ENCODE measurements at regions of chr6 and their contacts with region 1.

Region 1: DNA sequence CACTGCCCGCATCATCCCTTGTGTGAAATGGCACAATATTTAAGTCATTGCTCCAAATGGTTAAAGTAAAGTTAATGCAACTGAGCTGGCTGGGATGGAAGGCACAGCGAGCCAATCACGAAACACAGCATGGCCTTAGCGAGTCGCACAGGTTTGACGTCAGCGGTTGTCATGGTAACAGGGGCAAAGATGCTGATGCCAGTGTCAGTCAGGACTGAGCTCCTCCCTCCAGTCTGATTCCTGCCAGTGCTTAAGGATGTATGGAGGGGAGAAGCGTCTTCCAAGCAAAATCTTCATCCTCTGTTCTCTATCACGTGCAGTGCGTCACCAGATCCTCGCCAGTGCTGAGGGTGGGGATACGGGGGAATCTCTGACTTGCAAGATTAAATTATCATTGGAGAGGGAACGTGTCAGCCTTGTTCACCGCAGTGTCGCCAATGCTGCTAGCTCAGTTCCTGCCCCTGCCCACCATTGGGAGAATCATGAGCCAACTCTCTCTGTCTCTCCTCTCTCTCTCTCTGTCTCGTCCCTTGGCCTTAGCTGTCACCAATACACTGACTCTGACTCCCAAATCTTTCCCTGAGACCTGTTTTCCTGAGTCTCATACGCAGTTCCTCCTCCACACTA is 24.5 kb downstream of the TSPYL4 start:
- DNase-seq: peak in 4 of 35 experiments; percentile 3 to 9 (median 6)
- ATAC-seq: no peak
- H3K4me3 ChIP-seq: no peak overlapping the region
- H3K4me3 Mint-ChIP-seq: no peak overlapping the region
- H3K27ac ChIP-seq: no peak overlapping the region
- H3K27ac Mint-ChIP-seq: no peak overlapping the region
- H3K4me1 ChIP-seq: no peaks in the 10 kb centered on the region
- H3K4me1 Mint-ChIP-seq: no peaks in the 10 kb centered on the region
- H3K27me3 ChIP-seq: no peaks in the 10 kb centered on the region
- H3K27me3 Mint-ChIP-seq: no peaks in the 10 kb centered on the region

Region 2: GRCh38 chr6:116200619-116201249 is 28.7 kb before region 1 on chr6:
- CTCF ChIA-PET with region 1: no interaction called
- POLR2A ChIA-PET with region 1: no interaction called
- DNase-seq: no peak
- ATAC-seq: no peak
- H3K4me3 ChIP-seq: no peak overlapping the region
- H3K4me3 Mint-ChIP-seq: no peak overlapping the region
- H3K27ac ChIP-seq: no peak overlapping the region
- H3K27ac Mint-ChIP-seq: no peak overlapping the region
- H3K4me1 ChIP-seq: no peaks in the 10 kb centered on the region
- H3K4me1 Mint-ChIP-seq: peaks cover 0 to 7% (median 0%) of the 10 kb centered on the region in 3 donors
- H3K27me3 ChIP-seq: no peaks in the 10 kb centered on the region
- H3K27me3 Mint-ChIP-seq: no peaks in the 10 kb centered on the region

Region 3: GRCh38 chr6:116246089-116246488 is 16.7 kb after region 1 on chr6:
- CTCF ChIA-PET with region 1: interaction called in 1 of 2 experiments, 3 read pairs
- POLR2A ChIA-PET with region 1: interaction called in 1 of 2 experiments, 16 read pairs
- DNase-seq: no peak
- ATAC-seq: no peak
- H3K4me3 ChIP-seq: no peak overlapping the region
- H3K4me3 Mint-ChIP-seq: no peak overlapping the region
- H3K27ac ChIP-seq: no peak overlapping the region
- H3K27ac Mint-ChIP-seq: no peak overlapping the region
- H3K4me1 ChIP-seq: peaks cover 6 to 8% of the 10 kb centered on the region in 2 experiments
- H3K4me1 Mint-ChIP-seq: peaks cover 12 to 27% (median 24%) of the 10 kb centered on the region in 3 donors
- H3K27me3 ChIP-seq: no peaks in the 10 kb centered on the region
- H3K27me3 Mint-ChIP-seq: no peaks in the 10 kb centered on the region

Region 4: DNA sequence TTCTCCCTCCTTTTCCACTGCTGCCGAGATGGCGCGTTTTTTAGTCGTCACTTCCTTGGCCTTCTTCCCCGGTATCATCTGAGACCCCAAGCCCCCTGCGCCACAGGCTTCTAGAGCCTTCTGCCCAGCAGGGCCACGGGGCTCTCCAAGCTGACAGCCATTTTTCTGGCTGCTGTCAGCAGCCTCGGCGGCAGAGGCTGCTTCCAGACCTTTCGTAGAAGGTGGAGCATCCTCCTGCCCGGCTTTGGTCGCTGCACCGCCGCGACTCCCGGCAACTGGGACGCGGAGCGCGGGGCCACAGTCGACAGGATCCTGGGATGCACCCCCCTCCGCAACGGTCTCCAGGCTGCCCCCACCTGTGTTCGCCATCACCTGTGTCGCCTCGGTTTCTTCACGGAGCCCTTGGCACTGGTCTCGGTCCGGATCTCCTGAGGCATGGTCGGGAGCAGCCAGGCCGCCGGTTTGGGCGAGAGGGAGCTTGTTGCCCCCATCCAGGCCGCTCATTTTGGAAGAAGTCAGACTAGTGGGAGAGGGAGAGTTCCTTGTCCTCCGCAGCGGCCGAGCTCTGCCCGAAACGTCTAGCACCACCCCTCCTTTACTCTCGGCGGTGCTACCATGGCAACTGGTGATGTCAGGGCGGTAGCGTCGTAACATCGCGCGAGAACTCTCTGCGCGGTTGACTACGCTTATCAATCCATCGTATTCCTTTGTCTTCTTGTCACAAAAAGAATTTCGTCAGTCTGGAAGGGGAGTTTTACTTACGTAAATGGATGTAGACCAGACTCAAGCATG is 24.3 kb after region 1 on chr6 and contains the start of gene TSPYL4:
- CTCF ChIA-PET with region 1: no interaction called
- POLR2A ChIA-PET with region 1: interaction called in 1 of 2 experiments, 14 read pairs
- DNase-seq: peak; percentile 78 to 98 (median 90)
- ATAC-seq: peak; percentile 96 to 98 (median 98)
- H3K4me3 ChIP-seq: peak within 1 kb of the TSS; percentile 71 to 100
- H3K4me3 Mint-ChIP-seq: no peak within 1 kb of the TSS
- H3K27ac ChIP-seq: peak within 1 kb of the TSS; percentile 98
- H3K27ac Mint-ChIP-seq: no peak within 1 kb of the TSS
- H3K4me1 ChIP-seq: peaks cover 28 to 29% of the 10 kb centered on the region in 2 experiments
- H3K4me1 Mint-ChIP-seq: peaks cover 8 to 34% (median 21%) of the 10 kb centered on the region in 3 donors
- H3K27me3 ChIP-seq: no peaks in the 10 kb centered on the region
- H3K27me3 Mint-ChIP-seq: no peaks in the 10 kb centered on the region
- total RNA-seq, gene TSPYL4: 18.6 to 60.2 (median 22.4) TPM

Region 5: GRCh38 chr6:116726947-116727346 is 497.5 kb after region 1 on chr6:
- CTCF ChIA-PET with region 1: interaction called in 1 of 2 experiments, 10 read pairs
- POLR2A ChIA-PET with region 1: no interaction called
- DNase-seq: no peak
- ATAC-seq: no peak
- H3K4me3 ChIP-seq: no peak overlapping the region
- H3K4me3 Mint-ChIP-seq: no peak overlapping the region
- H3K27ac ChIP-seq: no peak overlapping the region
- H3K27ac Mint-ChIP-seq: no peak overlapping the region
- H3K4me1 ChIP-seq: no peaks in the 10 kb centered on the region
- H3K4me1 Mint-ChIP-seq: peaks cover 0 to 2% (median 0%) of the 10 kb centered on the region in 3 donors
- H3K27me3 ChIP-seq: no peaks in the 10 kb centered on the region
- H3K27me3 Mint-ChIP-seq: no peaks in the 10 kb centered on the region

Measured in T-cell (primary cell).